ENCODE measurements at regions of chr17 and their contacts with region 1.

Region 1: GRCh38 chr17:81484195-81484979 is 28.2 kb downstream of the ACTG1 start:
- DNase-seq: peak; percentile 76 to 96 (median 88)
- ATAC-seq: peak; percentile 88
- H3K4me3 ChIP-seq: peak overlapping the region; percentile 51
- H3K4me3 Mint-ChIP-seq: peak overlapping the region in 6 of 10 donors; percentile 25 to 74 (median 52)
- H3K27ac ChIP-seq: no peak overlapping the region
- H3K27ac Mint-ChIP-seq: no peak overlapping the region
- H3K4me1 ChIP-seq: peaks cover 6 to 10% of the 10 kb centered on the region in 2 donors
- H3K4me1 Mint-ChIP-seq: peaks cover 5 to 15% (median 13%) of the 10 kb centered on the region in 7 donors
- H3K27me3 ChIP-seq: peaks cover 0 to 15% of the 10 kb centered on the region in 2 donors
- H3K27me3 Mint-ChIP-seq: peaks cover 11 to 30% (median 20%) of the 10 kb centered on the region in 5 donors

Region 2: DNA sequence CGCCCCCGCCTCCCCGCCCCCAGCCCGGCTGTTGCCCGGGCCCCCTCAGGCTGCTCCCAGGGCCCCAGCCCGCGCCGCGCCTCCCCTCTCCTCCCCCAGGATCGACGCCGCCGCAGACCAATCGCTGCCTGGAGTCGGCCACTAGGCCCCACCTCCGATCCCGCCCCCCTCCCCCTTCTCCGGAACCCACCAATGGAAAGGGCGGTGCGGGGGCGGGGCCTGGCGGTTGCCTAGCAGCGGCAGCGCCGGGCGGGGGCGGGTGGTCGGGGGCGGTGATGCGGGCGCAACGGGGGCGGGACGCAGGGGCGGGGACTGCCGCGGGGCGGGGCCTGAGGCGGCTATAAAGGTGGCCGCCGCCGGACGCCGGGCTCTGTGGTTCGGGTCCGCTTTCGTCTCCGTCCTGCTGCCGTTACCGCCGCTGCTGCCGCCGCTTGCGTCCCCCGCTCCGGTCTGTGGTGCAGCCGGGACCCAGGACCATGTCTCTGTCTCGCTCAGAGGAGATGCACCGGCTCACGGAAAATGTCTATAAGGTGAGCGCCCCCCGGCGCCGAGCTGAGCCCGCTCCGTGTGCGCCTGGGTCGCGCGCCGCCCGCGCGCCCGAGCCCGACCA is 449.5 kb before region 1 on chr17 and contains the start of gene BAIAP2:
- CTCF ChIA-PET with region 1: no interaction called
- POLR2A ChIA-PET with region 1: no interaction called
- intact Hi-C with region 1: loop called in 1 of 2 experiments (anchors 10 kb)
- DNase-seq: peak; percentile 88 to 95 (median 94)
- ATAC-seq: peak; percentile 94
- H3K4me3 ChIP-seq: peak within 1 kb of the TSS; percentile 53
- H3K4me3 Mint-ChIP-seq: peak within 1 kb of the TSS; percentile 87 to 96 (median 92)
- H3K27ac ChIP-seq: peak within 1 kb of the TSS; percentile 67
- H3K27ac Mint-ChIP-seq: peak within 1 kb of the TSS in 8 of 9 donors; percentile 49 to 93 (median 87)
- H3K4me1 ChIP-seq: peaks cover 0 to 9% of the 10 kb centered on the region in 2 donors
- H3K4me1 Mint-ChIP-seq: peaks cover 5 to 27% (median 19%) of the 10 kb centered on the region in 7 donors
- H3K27me3 ChIP-seq: no peaks in the 10 kb centered on the region
- H3K27me3 Mint-ChIP-seq: peaks cover 0 to 50% (median 0%) of the 10 kb centered on the region in 5 donors
- total RNA-seq, gene BAIAP2: 7.3 to 13.7 (median 12.3) TPM

Region 3: DNA sequence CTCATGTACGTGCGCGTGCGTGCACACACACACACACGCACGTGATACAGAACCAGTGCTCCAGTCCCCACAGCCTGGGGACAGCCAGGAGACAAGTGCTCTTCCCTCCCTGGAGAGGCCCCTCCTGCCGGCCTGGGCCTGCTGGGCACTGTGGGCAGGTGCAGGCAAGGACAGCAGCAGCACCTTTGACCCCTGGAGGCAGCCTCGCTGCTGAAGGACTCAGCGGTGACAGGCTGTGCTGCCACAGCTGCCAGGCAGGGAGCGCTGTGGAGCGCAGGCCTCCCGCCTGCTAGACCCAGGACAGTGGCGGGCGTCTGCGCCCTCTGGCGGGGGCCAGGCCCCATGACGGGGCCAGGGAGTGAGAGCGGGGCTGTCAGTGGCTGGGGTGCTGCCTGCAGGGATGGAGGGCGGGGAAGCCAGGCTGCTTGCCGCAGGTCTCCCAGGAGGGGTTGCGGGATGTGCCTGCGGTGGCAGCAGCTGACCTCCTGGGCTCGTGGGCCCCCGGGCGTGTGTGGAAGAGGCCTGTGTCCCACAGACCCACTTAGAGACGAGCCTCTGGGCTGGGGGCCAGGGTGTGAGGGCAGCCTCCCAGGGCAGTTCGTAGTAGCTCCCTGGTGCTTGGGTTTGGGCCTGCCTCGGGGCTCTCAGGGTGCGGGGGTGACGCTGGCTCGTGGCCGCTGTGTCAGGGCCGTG is 382.6 kb before region 1 on chr17:
- CTCF ChIA-PET with region 1: no interaction called
- POLR2A ChIA-PET with region 1: no interaction called
- intact Hi-C with region 1: loop called in 1 of 2 experiments (anchors 1 kb)
- DNase-seq: peak; percentile 81 to 93 (median 90)
- ATAC-seq: peak; percentile 100
- H3K4me3 ChIP-seq: no peak overlapping the region
- H3K4me3 Mint-ChIP-seq: no peak overlapping the region
- H3K27ac ChIP-seq: no peak overlapping the region
- H3K27ac Mint-ChIP-seq: no peak overlapping the region
- H3K4me1 ChIP-seq: peaks cover 10 to 20% of the 10 kb centered on the region in 2 donors
- H3K4me1 Mint-ChIP-seq: peaks cover 0 to 3% (median under 1%) of the 10 kb centered on the region in 7 donors
- H3K27me3 ChIP-seq: no peaks in the 10 kb centered on the region
- H3K27me3 Mint-ChIP-seq: no peaks in the 10 kb centered on the region

Region 4: GRCh38 chr17:81142301-81143199 is 341.8 kb before region 1 on chr17:
- CTCF ChIA-PET with region 1: no interaction called
- POLR2A ChIA-PET with region 1: no interaction called
- intact Hi-C with region 1: loop called in 1 of 2 experiments (anchors 1 kb)
- DNase-seq: peak; percentile 29 to 61 (median 51)
- ATAC-seq: peak; percentile 88
- H3K4me3 ChIP-seq: no peak overlapping the region
- H3K4me3 Mint-ChIP-seq: no peak overlapping the region
- H3K27ac ChIP-seq: no peak overlapping the region
- H3K27ac Mint-ChIP-seq: peak overlapping the region in 1 of 9 donors; percentile 43
- H3K4me1 ChIP-seq: no peaks in the 10 kb centered on the region
- H3K4me1 Mint-ChIP-seq: peaks cover 0 to 4% (median 0%) of the 10 kb centered on the region in 7 donors
- H3K27me3 ChIP-seq: no peaks in the 10 kb centered on the region
- H3K27me3 Mint-ChIP-seq: peaks cover 0 to 4% (median 0%) of the 10 kb centered on the region in 5 donors

Region 5: DNA sequence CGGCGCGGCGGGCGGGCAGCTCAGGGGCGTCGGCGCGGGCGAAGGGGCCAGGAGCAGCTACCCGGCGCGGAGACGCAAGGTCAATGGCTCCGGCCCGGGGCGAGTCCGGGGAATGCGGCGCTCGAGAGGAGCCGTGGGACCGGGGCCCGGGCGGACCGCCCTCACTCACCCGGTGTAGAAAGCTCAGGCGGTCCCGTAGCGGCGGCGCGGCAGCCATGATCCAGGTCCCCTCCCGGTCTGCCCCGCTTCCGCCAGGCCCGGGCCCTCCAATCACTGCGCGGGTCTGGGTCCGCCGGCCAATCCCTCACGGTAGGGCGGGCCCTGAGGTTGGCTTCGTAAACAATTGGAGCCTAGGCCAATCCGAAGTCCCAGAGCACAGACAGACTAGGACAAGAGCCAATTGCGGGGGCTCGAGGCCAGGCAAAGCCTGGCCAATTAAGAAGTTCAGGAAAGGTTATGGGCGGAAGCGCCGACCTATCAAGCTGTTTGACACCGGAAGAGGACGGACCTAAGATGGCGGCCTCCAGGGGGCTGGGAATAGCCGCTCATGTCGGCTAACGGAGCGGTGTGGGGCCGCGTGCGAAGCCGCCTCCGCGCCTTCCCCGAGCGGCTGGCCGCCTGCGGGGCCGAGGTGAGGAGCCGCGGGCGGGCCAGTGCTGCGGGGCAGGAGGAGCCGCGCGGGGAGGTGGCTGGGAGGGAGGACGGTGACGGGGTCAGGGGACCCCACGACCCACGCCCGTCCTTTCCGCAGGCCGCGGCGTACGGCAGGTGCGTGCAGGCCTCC is 245.4 kb before region 1 on chr17 and contains the starts of genes NDUFAF8 and TEPSIN:
- CTCF ChIA-PET with region 1: interaction called, 3 read pairs
- POLR2A ChIA-PET with region 1: no interaction called
- intact Hi-C with region 1: loop called in 1 of 2 experiments (anchors 5 kb)
- DNase-seq: peak; percentile 87 to 98 (median 97)
- ATAC-seq: peak; percentile 98
- H3K4me3 ChIP-seq: peak within 1 kb of the TSS; percentile 71
- H3K4me3 Mint-ChIP-seq: peak within 1 kb of the TSS; percentile 92 to 97 (median 95)
- H3K27ac ChIP-seq: peak within 1 kb of the TSS; percentile 79
- H3K27ac Mint-ChIP-seq: peak within 1 kb of the TSS; percentile 86 to 95 (median 90)
- H3K4me1 ChIP-seq: peaks cover 22 to 24% of the 10 kb centered on the region in 2 donors
- H3K4me1 Mint-ChIP-seq: peaks cover 17 to 51% (median 38%) of the 10 kb centered on the region in 7 donors
- H3K27me3 ChIP-seq: no peaks in the 10 kb centered on the region
- H3K27me3 Mint-ChIP-seq: no peaks in the 10 kb centered on the region
- total RNA-seq, gene NDUFAF8: 34.2 to 45.6 (median 43.5) TPM
- total RNA-seq, gene TEPSIN: 52.6 to 115 (median 90.0) TPM

Region 6: DNA sequence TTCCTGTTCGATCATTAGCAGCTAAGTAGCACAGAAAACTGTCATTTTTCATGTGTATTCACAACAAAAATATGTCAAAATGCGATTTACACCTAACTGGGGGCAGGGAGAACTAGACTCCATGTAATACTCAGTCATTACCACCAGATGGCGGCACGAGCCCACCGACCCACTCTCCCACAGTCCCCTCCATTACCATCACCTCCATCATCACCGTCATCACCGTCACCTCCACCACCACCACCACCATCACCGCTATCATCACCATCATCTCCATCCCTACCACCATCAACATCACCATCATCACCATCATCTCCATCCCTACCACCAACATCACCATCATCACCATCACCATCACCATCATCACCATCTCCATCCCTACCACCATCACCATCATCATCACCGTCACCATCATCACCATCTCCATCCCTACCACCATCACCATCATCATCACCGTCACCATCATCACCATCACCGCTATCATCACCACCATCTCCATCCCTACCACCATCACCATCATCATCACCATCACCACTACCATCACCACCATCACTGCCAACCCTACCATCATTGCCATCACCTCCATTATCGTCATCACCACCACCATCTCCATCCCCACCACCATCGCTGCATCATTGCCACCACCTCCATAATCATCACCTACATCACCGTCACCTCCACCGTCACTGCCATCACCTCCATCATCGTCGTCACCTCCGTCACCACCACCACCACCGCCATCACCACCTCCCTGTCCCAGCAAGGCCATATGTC is 230.8 kb before region 1 on chr17:
- CTCF ChIA-PET with region 1: interaction called, 11 read pairs
- POLR2A ChIA-PET with region 1: interaction called, 4 read pairs
- intact Hi-C with region 1: loop called (anchors 1 kb)
- DNase-seq: peak; percentile 34 to 74 (median 63)
- ATAC-seq: peak; percentile 83
- H3K4me3 ChIP-seq: no peak overlapping the region
- H3K4me3 Mint-ChIP-seq: no peak overlapping the region
- H3K27ac ChIP-seq: no peak overlapping the region
- H3K27ac Mint-ChIP-seq: peak overlapping the region in 5 of 9 donors; percentile 2 to 67 (median 27)
- H3K4me1 ChIP-seq: no peaks in the 10 kb centered on the region
- H3K4me1 Mint-ChIP-seq: peaks cover 6 to 10% (median 7%) of the 10 kb centered on the region in 7 donors
- H3K27me3 ChIP-seq: no peaks in the 10 kb centered on the region
- H3K27me3 Mint-ChIP-seq: no peaks in the 10 kb centered on the region

Region 7: DNA sequence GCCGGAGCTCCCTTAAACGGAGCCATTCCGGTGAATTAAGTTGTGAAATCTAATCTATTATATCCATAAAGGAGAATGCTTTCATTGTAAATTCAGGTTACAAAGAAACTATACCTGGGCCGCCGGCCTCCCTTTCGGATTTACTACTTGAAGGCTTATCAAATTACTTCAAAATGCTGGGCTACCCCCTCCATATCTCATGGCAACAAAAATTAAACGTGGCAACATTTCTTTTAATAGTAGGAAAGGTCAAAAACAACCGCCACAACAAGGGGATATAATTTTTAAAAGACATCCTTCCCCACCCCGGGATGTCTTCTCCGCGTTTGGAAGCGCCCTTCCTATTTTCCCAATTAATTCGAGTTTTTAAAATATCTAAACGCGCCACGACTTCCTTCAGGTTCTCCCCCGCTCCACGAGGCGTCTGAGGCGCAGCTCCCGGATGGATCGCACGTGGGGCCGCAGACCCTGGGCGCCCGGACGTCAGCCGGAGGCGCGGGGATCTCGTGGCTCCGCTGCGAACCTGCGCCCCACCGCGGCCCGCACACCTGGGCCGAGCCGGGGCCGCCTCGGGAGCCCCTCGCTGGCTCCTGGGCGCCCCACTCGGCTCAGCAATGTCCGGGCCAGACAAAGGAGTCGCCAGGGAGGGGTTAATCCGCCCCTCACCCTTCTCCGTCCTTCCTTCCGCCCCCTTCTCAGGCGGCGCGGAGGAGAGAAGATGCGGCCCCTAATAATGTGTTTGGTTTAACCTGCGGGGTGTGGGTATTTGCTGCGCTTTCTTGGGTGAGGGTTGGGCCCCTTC is 141.9 kb before region 1 on chr17:
- CTCF ChIA-PET with region 1: no interaction called
- POLR2A ChIA-PET with region 1: no interaction called
- intact Hi-C with region 1: no loop called
- DNase-seq: peak in 1 of 9 donors; percentile 11
- ATAC-seq: no peak
- H3K4me3 ChIP-seq: no peak overlapping the region
- H3K4me3 Mint-ChIP-seq: peak overlapping the region in 7 of 10 donors; percentile 5 to 69 (median 29)
- H3K27ac ChIP-seq: no peak overlapping the region
- H3K27ac Mint-ChIP-seq: peak overlapping the region in 1 of 9 donors; percentile 70
- H3K4me1 ChIP-seq: peaks cover 17 to 31% of the 10 kb centered on the region in 2 donors
- H3K4me1 Mint-ChIP-seq: peaks cover 10 to 29% (median 16%) of the 10 kb centered on the region in 7 donors
- H3K27me3 ChIP-seq: peaks cover 3 to 50% of the 10 kb centered on the region in 2 donors
- H3K27me3 Mint-ChIP-seq: peaks cover 21 to 67% (median 33%) of the 10 kb centered on the region in 5 donors

Region 8: DNA sequence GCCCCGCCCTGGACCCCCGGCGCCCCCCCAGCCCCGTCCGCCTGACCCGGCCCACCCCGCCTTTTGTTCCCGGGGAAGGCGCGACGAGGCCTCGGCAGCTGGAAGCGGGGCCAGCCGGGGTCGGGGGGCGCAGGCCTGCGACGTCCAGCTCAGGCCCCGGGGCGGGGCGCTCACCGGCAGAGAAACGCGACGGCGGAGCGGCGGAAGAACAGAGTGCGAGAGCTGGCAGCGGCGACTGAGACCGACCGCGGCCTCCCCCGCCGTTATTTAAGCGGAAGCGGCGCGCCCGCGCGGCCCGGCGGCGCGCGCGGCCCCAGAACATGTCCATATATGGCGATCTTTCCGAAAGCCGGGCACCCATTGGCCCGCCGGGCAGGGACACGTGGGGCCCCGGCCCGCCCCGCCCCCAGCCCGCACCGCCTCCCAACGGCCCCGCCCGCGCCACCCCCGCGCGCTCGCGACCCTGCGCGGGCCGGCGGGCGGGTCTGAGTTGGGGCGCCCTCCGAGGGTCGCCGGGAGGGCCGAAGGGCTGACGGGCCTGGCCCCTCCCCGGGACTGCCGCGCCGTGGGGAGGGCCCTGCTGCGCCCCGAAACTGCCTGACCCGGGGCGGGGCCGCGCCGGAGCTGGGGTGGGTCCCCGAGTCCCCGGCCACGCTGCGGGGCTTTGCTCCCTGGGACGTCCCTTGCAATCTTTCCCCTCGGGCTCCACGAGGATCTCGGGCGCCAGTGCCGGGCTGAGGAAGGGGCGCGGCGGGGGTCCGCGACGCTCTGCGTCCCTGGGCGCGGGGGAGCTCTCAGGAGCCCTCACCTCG is 28.4 kb after region 1 on chr17 and contains the start of gene ACTG1:
- CTCF ChIA-PET with region 1: interaction called, 3 read pairs
- POLR2A ChIA-PET with region 1: interaction called, 48 read pairs
- intact Hi-C with region 1: loop called (anchors 2 kb)
- DNase-seq: peak; percentile 87 to 93 (median 92)
- ATAC-seq: peak; percentile 87
- H3K4me3 ChIP-seq: peak within 1 kb of the TSS; percentile 77
- H3K4me3 Mint-ChIP-seq: peak within 1 kb of the TSS; percentile 91 to 100 (median 98)
- H3K27ac ChIP-seq: peak within 1 kb of the TSS; percentile 79
- H3K27ac Mint-ChIP-seq: peak within 1 kb of the TSS; percentile 92 to 99 (median 95)
- H3K4me1 ChIP-seq: peaks cover 12 to 31% of the 10 kb centered on the region in 2 donors
- H3K4me1 Mint-ChIP-seq: peaks cover 23 to 53% (median 47%) of the 10 kb centered on the region in 7 donors
- H3K27me3 ChIP-seq: no peaks in the 10 kb centered on the region
- H3K27me3 Mint-ChIP-seq: peaks cover 0 to 7% (median 0%) of the 10 kb centered on the region in 5 donors
- total RNA-seq, gene ACTG1: 971 to 4,639 (median 1,185) TPM

Measured in naive thymus-derived CD4-positive, alpha-beta T cell (primary cell).